Endothelial cell of umbilical vein (primary cell): ENCODE measurements at regions of chr3 and their contacts with region 1.

Region 1: GRCh38 chr3:157088601-157089454 is 71.1 kb downstream of the CCNL1 start:
- DNase-seq: peak; percentile 96
- H3K4me3 ChIP-seq: peak overlapping the region; percentile 36 to 61 (median 54)
- H3K27ac ChIP-seq: peak overlapping the region; percentile 86
- H3K4me1 ChIP-seq: peaks cover 26% of the 10 kb centered on the region
- H3K27me3 ChIP-seq: no peaks in the 10 kb centered on the region
- CTCF ChIP-seq: peak in 1 of 2 donors; percentile 9
- POLR2A ChIP-seq: peak; percentile 72

Region 2: DNA sequence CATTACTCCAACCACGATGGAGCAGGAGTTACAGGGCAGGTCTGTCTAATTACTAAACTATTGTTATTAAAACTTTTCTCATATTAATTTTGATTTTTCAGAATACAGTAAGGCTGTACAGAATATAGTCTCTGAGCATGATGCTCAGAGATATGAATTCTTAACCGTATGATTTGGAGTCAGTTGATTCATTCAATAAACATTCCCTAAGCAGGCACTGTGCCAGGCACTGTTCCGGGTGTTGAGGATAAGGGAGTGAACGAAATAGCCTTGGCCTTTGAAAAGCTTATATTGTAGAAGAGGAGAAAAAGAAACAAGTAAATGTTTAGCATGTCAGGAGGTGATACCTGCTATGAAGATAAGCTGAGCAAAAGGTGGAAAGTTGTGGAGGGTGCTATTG is 781.1 kb before region 1 on chr3:
- CTCF ChIA-PET with region 1: no interaction called
- POLR2A ChIA-PET with region 1: no interaction called
- dilution Hi-C with region 1: no loop called
- intact Hi-C with region 1: loop called (anchors 1 kb)
- DNase-seq: peak; percentile 89
- H3K4me3 ChIP-seq: no peak overlapping the region
- H3K27ac ChIP-seq: peak overlapping the region; percentile 57
- H3K4me1 ChIP-seq: peaks cover 48% of the 10 kb centered on the region
- H3K27me3 ChIP-seq: no peaks in the 10 kb centered on the region
- CTCF ChIP-seq: no peak
- POLR2A ChIP-seq: no peak

Region 3: GRCh38 chr3:156554842-156555687 is 533.8 kb before region 1 on chr3 and contains the start of gene SSR3:
- CTCF ChIA-PET with region 1: interaction called, 12 read pairs
- POLR2A ChIA-PET with region 1: interaction called, 3 read pairs
- dilution Hi-C with region 1: no loop called
- intact Hi-C with region 1: loop called (anchors 1 kb)
- DNase-seq: peak; percentile 99
- H3K4me3 ChIP-seq: peak within 1 kb of the TSS; percentile 79 to 97 (median 94)
- H3K27ac ChIP-seq: peak within 1 kb of the TSS; percentile 87
- H3K4me1 ChIP-seq: peaks cover 42% of the 10 kb centered on the region
- H3K27me3 ChIP-seq: no peaks in the 10 kb centered on the region
- CTCF ChIP-seq: no peak
- POLR2A ChIP-seq: peak; percentile 93
- total RNA-seq, gene SSR3: 355 and 370 TPM in 2 replicates

Region 4: GRCh38 chr3:156816800-156817645 is 271.8 kb before region 1 on chr3:
- CTCF ChIA-PET with region 1: interaction called, 3 read pairs
- POLR2A ChIA-PET with region 1: no interaction called
- dilution Hi-C with region 1: no loop called
- intact Hi-C with region 1: loop called (anchors 2 kb)
- DNase-seq: peak; percentile 86
- H3K4me3 ChIP-seq: peak overlapping the region in 2 of 3 experiments; percentile 37
- H3K27ac ChIP-seq: peak overlapping the region; percentile 91
- H3K4me1 ChIP-seq: peaks cover 56% of the 10 kb centered on the region
- H3K27me3 ChIP-seq: no peaks in the 10 kb centered on the region
- CTCF ChIP-seq: no peak
- POLR2A ChIP-seq: no peak

Region 5: DNA sequence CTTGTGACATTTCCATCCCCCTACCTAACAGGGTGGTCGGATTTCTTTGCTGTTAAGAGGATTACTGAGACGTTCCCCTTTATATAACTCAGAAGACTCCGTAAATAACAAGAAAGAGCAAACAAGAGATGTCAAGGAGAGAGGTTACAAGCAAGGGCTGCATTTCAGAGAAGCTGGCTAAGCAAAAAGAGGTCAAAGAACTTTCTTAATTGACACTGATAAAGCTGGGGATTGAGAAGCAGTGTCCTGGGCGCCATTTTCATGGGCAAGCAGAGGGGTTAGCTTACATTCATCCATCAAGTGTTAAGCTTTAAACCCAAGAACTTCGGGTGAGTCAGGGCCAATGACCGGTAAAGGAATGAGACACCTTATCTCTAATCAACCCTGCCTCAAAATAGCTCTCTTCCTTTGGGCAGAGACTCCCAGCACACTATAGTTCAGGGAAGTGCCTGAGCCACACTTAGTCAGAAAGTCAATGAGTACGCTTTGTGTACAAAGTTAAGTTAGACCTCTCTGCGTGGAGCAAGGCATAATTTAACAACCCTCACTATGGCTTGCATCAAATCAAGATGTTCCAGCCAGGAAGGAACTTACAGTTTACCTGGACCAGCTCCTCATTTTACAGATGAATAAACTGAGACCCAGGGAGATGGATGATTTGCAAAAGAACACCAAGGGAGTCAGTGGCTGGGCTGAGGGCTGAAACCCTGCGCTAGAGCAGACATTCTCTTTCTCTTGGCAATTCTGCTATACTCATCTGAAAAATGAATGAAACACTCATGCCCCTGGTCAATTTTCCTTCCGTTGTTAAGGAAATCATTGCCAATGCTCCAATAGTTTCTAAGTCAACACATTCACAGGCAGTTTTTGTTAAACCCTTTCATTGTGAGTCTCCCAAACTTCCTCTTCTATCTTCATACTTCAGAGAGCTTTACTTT is 26.5 kb after region 1 on chr3:
- CTCF ChIA-PET with region 1: interaction called, 19 read pairs
- POLR2A ChIA-PET with region 1: no interaction called
- dilution Hi-C with region 1: no loop called
- intact Hi-C with region 1: no loop called
- DNase-seq: peak; percentile 19
- H3K4me3 ChIP-seq: no peak overlapping the region
- H3K27ac ChIP-seq: no peak overlapping the region
- H3K4me1 ChIP-seq: peaks cover 8% of the 10 kb centered on the region
- H3K27me3 ChIP-seq: no peaks in the 10 kb centered on the region
- CTCF ChIP-seq: no peak
- POLR2A ChIP-seq: no peak

Region 6: GRCh38 chr3:157130467-157131251 is 41.8 kb after region 1 on chr3:
- CTCF ChIA-PET with region 1: interaction called, 83 read pairs
- POLR2A ChIA-PET with region 1: interaction called, 4 read pairs
- dilution Hi-C with region 1: no loop called
- intact Hi-C with region 1: loop called (anchors 1 kb)
- DNase-seq: peak; percentile 61
- H3K4me3 ChIP-seq: no peak overlapping the region
- H3K27ac ChIP-seq: peak overlapping the region; percentile 60
- H3K4me1 ChIP-seq: peaks cover 39% of the 10 kb centered on the region
- H3K27me3 ChIP-seq: no peaks in the 10 kb centered on the region
- CTCF ChIP-seq: peak; percentile 58 to 59
- POLR2A ChIP-seq: no peak

Region 7: GRCh38 chr3:157226173-157226847 is 137.5 kb after region 1 on chr3:
- CTCF ChIA-PET with region 1: no interaction called
- POLR2A ChIA-PET with region 1: no interaction called
- dilution Hi-C with region 1: no loop called
- intact Hi-C with region 1: no loop called
- DNase-seq: no peak
- H3K4me3 ChIP-seq: no peak overlapping the region
- H3K27ac ChIP-seq: no peak overlapping the region
- H3K4me1 ChIP-seq: no peaks in the 10 kb centered on the region
- H3K27me3 ChIP-seq: no peaks in the 10 kb centered on the region
- CTCF ChIP-seq: no peak
- POLR2A ChIP-seq: no peak

Region 8: GRCh38 chr3:157436583-157437291 is 347.9 kb after region 1 on chr3 and contains the start of gene PTX3:
- CTCF ChIA-PET with region 1: no interaction called
- POLR2A ChIA-PET with region 1: no interaction called
- dilution Hi-C with region 1: no loop called
- intact Hi-C with region 1: no loop called
- DNase-seq: peak; percentile 85
- H3K4me3 ChIP-seq: peak within 1 kb of the TSS; percentile 68 to 93 (median 79)
- H3K27ac ChIP-seq: peak within 1 kb of the TSS; percentile 74
- H3K4me1 ChIP-seq: peaks cover 31% of the 10 kb centered on the region
- H3K27me3 ChIP-seq: no peaks in the 10 kb centered on the region
- CTCF ChIP-seq: no peak
- POLR2A ChIP-seq: peak; percentile 89
- total RNA-seq, gene PTX3: 149 and 172 TPM in 2 replicates